ENCODE measurements at regions of chr6 and their contacts with region 1.

Region 1: DNA sequence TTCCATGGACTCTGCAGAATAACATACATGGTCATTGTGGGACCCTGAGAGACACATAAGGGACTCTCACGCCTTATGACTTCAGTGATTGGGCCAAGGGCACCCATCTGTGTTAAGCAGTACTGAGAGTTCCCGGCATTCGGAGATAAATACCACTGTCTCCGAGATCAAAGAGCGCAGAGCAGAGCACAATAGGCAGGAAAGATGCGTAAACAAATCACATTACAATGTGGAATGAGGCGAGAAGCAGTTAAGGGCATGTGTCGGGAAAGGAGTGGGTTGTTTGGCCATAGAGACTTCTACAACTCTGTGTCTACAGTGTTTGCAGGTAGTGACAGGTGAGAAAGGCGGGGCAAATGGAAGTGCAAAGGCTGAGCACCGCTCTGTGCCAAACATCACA is 57.6 kb downstream of the NRSN1 start:
- DNase-seq: no peak
- H3K4me3 ChIP-seq: no peak overlapping the region
- H3K27ac ChIP-seq: no peak overlapping the region
- H3K4me1 ChIP-seq: no peaks in the 10 kb centered on the region
- H3K27me3 ChIP-seq: no peaks in the 10 kb centered on the region
- CTCF ChIP-seq: no peak
- POLR2A ChIP-seq: no peak

Region 2: DNA sequence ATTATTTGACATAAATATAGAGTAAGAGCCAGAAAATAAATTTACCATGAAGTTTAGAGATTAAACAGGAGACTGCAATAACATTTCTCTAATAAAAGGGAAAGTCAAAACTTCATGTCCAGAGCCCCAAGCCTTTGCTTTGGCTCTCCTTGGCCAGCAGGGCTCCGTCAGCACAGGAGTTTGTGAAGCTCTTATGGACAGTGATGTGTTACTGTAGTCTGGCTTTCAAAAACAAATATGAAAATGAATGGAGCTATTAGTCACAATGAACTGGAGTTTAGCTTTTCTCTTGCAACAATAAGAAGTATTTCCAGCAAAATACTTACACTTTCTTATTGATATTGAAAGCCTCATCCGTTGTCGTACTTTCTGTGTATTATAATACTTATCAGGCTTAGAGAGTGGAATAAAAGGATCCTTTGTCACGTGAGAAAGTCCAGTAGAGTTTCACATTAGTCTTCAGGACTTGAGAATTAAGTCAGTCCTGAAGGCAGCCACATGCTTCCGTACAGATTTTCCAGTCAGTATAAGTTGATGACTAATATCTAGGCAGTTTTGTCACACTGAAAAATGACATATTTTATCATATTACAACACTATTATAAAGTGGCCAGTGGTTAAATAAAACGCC is 1769.8 kb before region 1 on chr6:
- intact Hi-C with region 1: loop called (anchors 10 kb)
- DNase-seq: no peak
- H3K4me3 ChIP-seq: no peak overlapping the region
- H3K27ac ChIP-seq: peak overlapping the region in 1 of 2 donors; percentile 3
- H3K4me1 ChIP-seq: no peaks in the 10 kb centered on the region
- H3K27me3 ChIP-seq: no peaks in the 10 kb centered on the region
- CTCF ChIP-seq: no peak
- POLR2A ChIP-seq: no peak

Region 3: DNA sequence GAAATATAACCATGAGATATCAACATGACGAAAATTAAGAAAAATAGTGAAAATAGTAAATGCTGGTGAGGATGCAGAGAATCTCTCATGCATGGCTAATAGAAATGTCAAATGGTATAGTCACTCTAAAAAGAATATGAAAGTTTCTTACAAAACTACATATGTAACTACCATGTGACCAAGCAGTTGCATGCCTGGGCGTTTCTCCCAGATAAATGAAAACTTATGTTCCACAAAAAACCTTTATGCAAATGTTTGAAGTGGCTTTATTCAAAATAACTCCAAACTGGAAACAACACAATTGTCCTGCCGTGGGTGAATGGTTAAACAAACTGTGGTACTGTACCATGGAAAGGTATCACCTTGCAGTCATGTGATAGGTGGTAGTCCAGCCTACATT is 1501.8 kb before region 1 on chr6:
- intact Hi-C with region 1: no loop called
- DNase-seq: no peak
- H3K4me3 ChIP-seq: no peak overlapping the region
- H3K27ac ChIP-seq: no peak overlapping the region
- H3K4me1 ChIP-seq: no peaks in the 10 kb centered on the region
- H3K27me3 ChIP-seq: no peaks in the 10 kb centered on the region
- CTCF ChIP-seq: no peak
- POLR2A ChIP-seq: no peak

Region 4: GRCh38 chr6:24140591-24140990 is 43.0 kb before region 1 on chr6:
- intact Hi-C with region 1: loop called (anchors 2 kb)
- DNase-seq: peak in 1 of 2 donors; percentile 23
- H3K4me3 ChIP-seq: peak overlapping the region in 2 of 3 donors; percentile 1 to 46
- H3K27ac ChIP-seq: peak overlapping the region in 1 of 2 donors; percentile 55
- H3K4me1 ChIP-seq: no peaks in the 10 kb centered on the region
- H3K27me3 ChIP-seq: no peaks in the 10 kb centered on the region
- CTCF ChIP-seq: no peak
- POLR2A ChIP-seq: no peak